A549 (cell line): ENCODE measurements at regions of chr2 and their contacts with region 1.

Region 1: GRCh38 chr2:85648619-85649018 is 19.4 kb downstream of the SFTPB start:
- DNase-seq: peak; percentile 72 to 76
- ATAC-seq: peak; percentile 72 to 84
- H3K4me3 ChIP-seq: no peak overlapping the region
- H3K27ac ChIP-seq: peak overlapping the region; percentile 80 to 91
- H3K4me1 ChIP-seq: peaks cover 59% of the 10 kb centered on the region
- CTCF ChIP-seq: peak; percentile 71
- EP300 ChIP-seq: no peak
- POLR2A ChIP-seq: no peak
- RAD21 ChIP-seq: peak; percentile 63 to 67

Region 2: GRCh38 chr2:85628658-85629057 is 20.0 kb before region 1 on chr2:
- CTCF ChIA-PET with region 1: interaction called, 17 read pairs
- POLR2A ChIA-PET with region 1: interaction called, 3 read pairs
- DNase-seq: no peak
- ATAC-seq: no peak
- H3K4me3 ChIP-seq: no peak overlapping the region
- H3K27ac ChIP-seq: no peak overlapping the region
- H3K4me1 ChIP-seq: no peaks in the 10 kb centered on the region
- CTCF ChIP-seq: no peak
- EP300 ChIP-seq: no peak
- POLR2A ChIP-seq: no peak
- RAD21 ChIP-seq: no peak

Region 3: DNA sequence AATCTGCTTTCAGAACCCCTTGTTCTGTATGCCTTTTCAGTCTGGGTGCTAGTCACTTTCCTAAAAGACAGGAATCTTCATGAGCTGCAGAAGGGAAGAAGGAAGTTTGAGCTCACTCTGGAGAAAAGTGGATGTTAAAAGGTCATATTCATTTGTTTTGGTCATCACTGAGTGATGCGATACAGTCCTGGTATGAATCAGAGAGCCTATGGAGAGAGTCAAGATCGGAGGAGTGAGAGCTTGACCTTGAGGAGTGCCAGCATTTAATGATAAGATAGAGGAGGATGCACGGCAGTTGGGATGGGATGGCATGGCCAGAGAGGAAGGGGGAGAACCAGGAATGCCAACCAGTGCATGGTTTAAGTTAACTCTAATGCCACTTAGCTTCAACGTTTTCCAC is 13.0 kb before region 1 on chr2:
- CTCF ChIA-PET with region 1: interaction called, 126 read pairs
- POLR2A ChIA-PET with region 1: interaction called, 6 read pairs
- DNase-seq: no peak
- ATAC-seq: no peak
- H3K4me3 ChIP-seq: no peak overlapping the region
- H3K27ac ChIP-seq: no peak overlapping the region
- H3K4me1 ChIP-seq: peaks cover 3% of the 10 kb centered on the region; the same call in 1 of the 3 replicates
- CTCF ChIP-seq: no peak
- EP300 ChIP-seq: no peak
- POLR2A ChIP-seq: no peak
- RAD21 ChIP-seq: no peak

Region 4: GRCh38 chr2:85662899-85663593 is 14.4 kb after region 1 on chr2:
- CTCF ChIA-PET with region 1: interaction called, 46 read pairs
- POLR2A ChIA-PET with region 1: interaction called, 4 read pairs
- DNase-seq: peak in 1 of 2 experiments; percentile 67
- ATAC-seq: peak; percentile 72 to 80
- H3K4me3 ChIP-seq: no peak overlapping the region
- H3K27ac ChIP-seq: peak overlapping the region in 1 of 2 experiments; percentile 74; a peak in 3 of 6 replicates
- H3K4me1 ChIP-seq: peaks cover 15% of the 10 kb centered on the region
- CTCF ChIP-seq: no peak
- EP300 ChIP-seq: no peak
- POLR2A ChIP-seq: 0 out of 2 replicates have a peak, but pooled peaks have one; percentile 5
- RAD21 ChIP-seq: no peak